ENCODE measurements at regions of chr1 and their contacts with region 1.

Region 1: DNA sequence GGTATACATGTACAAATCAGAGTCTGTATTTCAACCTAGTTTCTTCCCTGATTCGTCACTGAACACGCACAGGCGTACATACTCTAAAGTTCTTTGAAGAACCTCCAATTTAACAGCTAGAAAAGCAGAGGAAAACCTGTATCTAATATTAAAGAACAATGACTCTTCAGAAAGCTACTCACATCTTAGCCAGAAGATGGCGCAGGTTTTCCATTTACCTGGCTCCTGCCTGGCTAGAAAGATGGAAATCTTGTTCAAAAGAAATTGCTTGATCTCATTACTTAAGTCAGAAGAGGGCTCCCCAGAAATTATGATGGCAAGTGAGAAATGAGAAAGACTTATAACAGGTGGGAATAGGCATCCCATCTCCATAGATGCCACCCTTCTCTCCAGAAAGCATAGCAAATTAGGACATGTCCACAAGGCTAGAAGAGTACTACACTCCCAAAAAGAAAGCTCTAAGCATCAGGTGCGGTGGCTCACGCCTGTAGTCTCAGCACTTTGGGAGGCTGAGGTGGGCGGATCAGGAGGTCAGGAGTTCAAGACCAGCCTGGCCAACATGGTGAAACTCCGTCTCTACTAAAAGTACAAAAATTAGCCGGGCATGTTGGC is 19.0 kb upstream of the L1TD1 start:
- H3K4me3 ChIP-seq: no peak overlapping the region
- H3K27ac ChIP-seq: no peak overlapping the region
- H3K4me1 ChIP-seq: no peaks in the 10 kb centered on the region
- CTCF ChIP-seq: peak; percentile 57; the same call in 1 of the 2 replicates

Region 2: GRCh38 chr1:62159940-62160348 is 15.7 kb before region 1 on chr1:
- CTCF ChIA-PET with region 1: interaction called, 11 read pairs
- POLR2A ChIA-PET with region 1: no interaction called
- H3K4me3 ChIP-seq: no peak overlapping the region
- H3K27ac ChIP-seq: no peak overlapping the region
- H3K4me1 ChIP-seq: no peaks in the 10 kb centered on the region
- CTCF ChIP-seq: no peak

Region 3: GRCh38 chr1:62294261-62294660 is 118.6 kb after region 1 on chr1:
- CTCF ChIA-PET with region 1: interaction called, 12 read pairs
- POLR2A ChIA-PET with region 1: no interaction called
- H3K4me3 ChIP-seq: no peak overlapping the region
- H3K27ac ChIP-seq: no peak overlapping the region
- H3K4me1 ChIP-seq: peaks cover 8% of the 10 kb centered on the region
- CTCF ChIP-seq: peak; percentile 67

Region 4: GRCh38 chr1:62407405-62408009 is 231.8 kb after region 1 on chr1:
- CTCF ChIA-PET with region 1: interaction called, 84 read pairs
- POLR2A ChIA-PET with region 1: no interaction called
- H3K4me3 ChIP-seq: no peak overlapping the region
- H3K27ac ChIP-seq: no peak overlapping the region
- H3K4me1 ChIP-seq: no peaks in the 10 kb centered on the region
- CTCF ChIP-seq: no peak

Region 5: GRCh38 chr1:62746085-62746808 is 570.6 kb after region 1 on chr1:
- CTCF ChIA-PET with region 1: interaction called, 12 read pairs
- POLR2A ChIA-PET with region 1: no interaction called
- H3K4me3 ChIP-seq: no peak overlapping the region
- H3K27ac ChIP-seq: no peak overlapping the region
- H3K4me1 ChIP-seq: no peaks in the 10 kb centered on the region
- CTCF ChIP-seq: 0 out of 2 replicates have a peak, but pooled peaks have one; percentile 21

Measured in HEK293 (cell line).